Pancreas (tissue), 10 donors: ENCODE measurements at regions of chr3 and their contacts with region 1.

Region 1: DNA sequence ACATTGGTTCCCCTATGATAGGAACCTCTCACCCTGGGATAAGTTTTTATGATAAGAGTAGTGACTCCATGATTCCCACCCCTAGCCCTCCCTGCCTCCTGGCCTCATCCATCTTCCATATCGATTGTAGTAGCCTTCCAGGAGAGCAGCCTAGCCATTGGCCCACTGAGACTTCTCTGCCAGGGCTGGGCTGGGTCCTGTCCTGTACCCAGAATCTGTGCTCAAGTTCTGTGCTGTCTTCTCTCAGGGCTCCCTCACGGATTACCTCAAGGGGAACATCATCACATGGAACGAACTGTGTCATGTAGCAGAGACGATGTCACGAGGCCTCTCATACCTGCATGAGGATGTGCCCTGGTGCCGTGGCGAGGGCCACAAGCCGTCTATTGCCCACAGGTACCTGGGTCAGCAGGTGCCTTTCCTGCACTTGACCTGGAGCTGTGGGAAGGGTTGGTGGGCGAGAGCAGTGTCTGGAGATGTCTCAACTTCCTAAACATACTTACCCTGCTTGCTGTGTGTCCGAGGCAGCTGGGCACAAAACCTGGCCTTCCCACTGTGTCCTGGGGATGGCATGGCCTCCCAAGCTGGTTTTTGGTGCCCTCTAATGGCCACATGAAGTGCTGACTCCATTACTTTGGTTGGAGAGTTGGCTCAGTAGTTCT is 16.6 kb upstream of the EXOG start:
- DNase-seq: peak; percentile 56 to 87 (median 72)
- ATAC-seq: peak; percentile 90 to 98 (median 96)
- H3K4me3 ChIP-seq: no peak overlapping the region
- H3K27ac ChIP-seq: no peak overlapping the region
- H3K4me1 ChIP-seq: no peaks in the 10 kb centered on the region
- H3K27me3 ChIP-seq: no peaks in the 10 kb centered on the region
- CTCF ChIP-seq: peak; percentile 74 to 87 (median 79)

Region 2: DNA sequence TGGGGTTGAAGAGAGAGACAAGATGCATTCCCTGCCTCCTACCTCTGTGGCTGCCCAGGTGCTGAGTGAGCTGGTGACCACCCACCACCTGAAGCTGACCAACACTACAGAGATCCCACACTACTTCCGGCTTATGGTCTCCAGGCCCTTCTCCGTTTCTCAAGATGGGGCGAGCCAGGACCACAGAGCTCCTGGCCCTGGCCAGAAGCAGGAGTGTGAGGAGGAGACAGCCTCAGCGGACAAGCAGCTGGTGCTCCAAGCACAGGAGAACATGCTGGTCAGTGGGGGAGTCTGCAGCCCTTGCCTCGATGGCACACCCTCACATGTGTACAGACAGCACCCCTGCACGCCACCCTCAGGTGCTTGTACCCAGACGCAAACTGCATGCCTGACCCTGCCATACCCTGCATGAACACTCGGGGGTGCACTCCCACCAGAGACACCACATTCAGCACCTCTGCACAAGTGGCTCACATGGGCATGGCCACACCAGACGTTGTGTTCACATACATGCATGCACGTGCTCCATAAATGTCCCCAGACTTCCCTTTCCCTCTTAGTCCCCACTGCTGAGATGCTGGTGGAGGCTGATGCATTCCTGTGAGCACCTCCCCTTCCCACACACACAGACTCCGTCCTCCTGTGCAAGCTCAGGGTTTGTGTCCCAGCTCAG is 361.7 kb before region 1 on chr3:
- intact Hi-C with region 1: loop called in 1 of 3 experiments (anchors 10 kb)
- DNase-seq: peak in 5 of 6 donors; percentile 46 to 84 (median 74)
- ATAC-seq: peak; percentile 63 to 91 (median 84)
- H3K4me3 ChIP-seq: no peak overlapping the region
- H3K27ac ChIP-seq: no peak overlapping the region
- H3K4me1 ChIP-seq: no peaks in the 10 kb centered on the region
- H3K27me3 ChIP-seq: no peaks in the 10 kb centered on the region
- CTCF ChIP-seq: peak; percentile 50 to 59 (median 55)

Region 3: DNA sequence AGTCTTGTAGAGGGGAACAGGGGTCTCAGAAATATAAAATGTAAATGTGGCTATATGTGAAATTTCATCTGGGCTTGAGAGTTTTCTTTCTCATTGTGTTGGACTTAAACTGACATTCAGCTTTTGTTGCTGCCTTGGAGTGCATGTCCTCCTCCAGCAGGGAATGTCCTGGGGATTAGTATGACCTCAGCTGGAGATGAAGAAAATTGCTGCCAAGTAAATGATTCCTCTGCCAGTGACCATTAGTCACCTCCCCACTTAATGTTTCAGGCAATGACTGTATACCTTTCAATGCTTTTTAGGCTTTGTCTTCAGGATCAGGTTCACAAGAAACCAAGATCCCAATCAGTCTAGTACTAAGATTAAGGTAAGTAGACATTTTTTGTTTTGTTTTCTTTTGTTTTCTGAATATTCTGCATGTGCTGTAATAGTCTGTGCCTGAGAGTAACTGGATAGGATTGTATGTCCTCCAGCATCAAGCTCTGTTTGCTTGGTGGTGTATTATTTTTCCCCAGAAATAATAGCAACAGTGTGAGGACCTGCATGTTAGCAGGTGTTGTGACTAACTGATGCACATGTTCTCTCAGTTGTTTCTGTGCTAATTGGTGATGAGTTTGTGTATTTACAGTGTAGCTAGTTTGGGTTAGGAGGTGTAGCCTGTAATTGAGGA is 232.1 kb before region 1 on chr3:
- intact Hi-C with region 1: no loop called
- DNase-seq: no peak
- ATAC-seq: peak in 3 of 4 donors; percentile 73 to 82 (median 80)
- H3K4me3 ChIP-seq: no peak overlapping the region
- H3K27ac ChIP-seq: no peak overlapping the region
- H3K4me1 ChIP-seq: no peaks in the 10 kb centered on the region
- H3K27me3 ChIP-seq: no peaks in the 10 kb centered on the region
- CTCF ChIP-seq: no peak

Region 4: GRCh38 chr3:38346587-38347410 is 132.8 kb before region 1 on chr3 and contains the start of gene XYLB:
- intact Hi-C with region 1: loop called in 1 of 3 experiments (anchors 5 kb)
- DNase-seq: peak; percentile 84 to 97 (median 91)
- ATAC-seq: peak; percentile 97 to 100 (median 98)
- H3K4me3 ChIP-seq: peak within 1 kb of the TSS; percentile 56 to 88 (median 82)
- H3K27ac ChIP-seq: peak within 1 kb of the TSS in 3 of 4 donors; percentile 4 to 54 (median 48)
- H3K4me1 ChIP-seq: peaks cover 0 to 3% (median 0%) of the 10 kb centered on the region in 3 donors
- H3K27me3 ChIP-seq: no peaks in the 10 kb centered on the region
- CTCF ChIP-seq: peak; percentile 66 to 84 (median 74)
- total RNA-seq, gene XYLB: 4.3 to 6.9 (median 4.7) TPM

Region 5: DNA sequence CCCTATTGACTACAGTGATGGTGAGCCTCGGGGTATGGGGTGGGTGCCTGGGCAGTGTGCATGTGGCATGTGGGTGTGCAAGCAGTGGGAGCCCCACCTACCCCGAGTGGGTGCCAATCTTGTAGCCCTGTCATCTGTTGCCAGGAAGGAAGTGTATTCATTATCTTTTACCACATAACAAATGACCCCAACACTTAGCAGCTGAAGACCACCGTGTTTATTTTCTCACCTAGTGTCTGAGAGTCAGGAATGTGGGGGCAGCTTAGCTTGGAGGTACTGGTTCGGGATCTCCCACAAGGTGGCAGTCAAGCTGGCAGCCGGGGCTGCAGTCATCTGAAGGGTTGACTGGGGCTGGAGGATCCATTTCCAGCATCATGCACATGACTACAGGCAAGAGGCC is 111.3 kb before region 1 on chr3:
- intact Hi-C with region 1: loop called in 1 of 3 experiments (anchors 10 kb)
- DNase-seq: no peak
- ATAC-seq: no peak
- H3K4me3 ChIP-seq: no peak overlapping the region
- H3K27ac ChIP-seq: no peak overlapping the region
- H3K4me1 ChIP-seq: no peaks in the 10 kb centered on the region
- H3K27me3 ChIP-seq: no peaks in the 10 kb centered on the region
- CTCF ChIP-seq: no peak